H1 (cell line): ENCODE measurements at regions of chr1 and their contacts with region 1.

Region 1: DNA sequence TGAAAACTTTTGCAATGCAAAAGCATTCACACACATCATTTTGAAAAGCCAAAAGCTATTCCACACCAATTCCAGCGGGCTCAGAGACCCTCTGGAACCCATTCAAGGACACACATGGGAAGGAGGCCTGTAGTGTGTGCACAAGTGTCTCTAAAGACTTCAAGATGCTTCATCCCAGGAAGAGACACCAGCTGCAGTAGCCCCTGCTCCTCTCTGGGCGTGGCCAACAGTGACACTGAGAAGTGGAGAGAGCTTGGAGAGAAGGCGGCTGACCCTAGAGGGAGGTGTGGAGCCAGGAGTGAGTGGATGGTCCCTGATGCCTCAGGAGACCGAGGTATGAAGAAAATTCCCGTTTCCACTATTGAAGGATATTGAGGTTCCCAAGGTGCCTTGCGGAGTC is 14.9 kb upstream of the TNNI1 start:
- DNase-seq: peak in 1 of 2 experiments; percentile 63
- H3K4me3 ChIP-seq: no peak overlapping the region
- H3K27ac ChIP-seq: no peak overlapping the region
- H3K4me1 ChIP-seq: peaks cover 0 to 7% (median 3%) of the 10 kb centered on the region in 4 experiments; a peak in 3 of 7 replicates
- H3K27me3 ChIP-seq: no peaks in the 10 kb centered on the region
- CTCF ChIP-seq: peak; percentile 39 to 55 (median 49); a peak in 3 of 4 replicates
- EP300 ChIP-seq: no peak
- POLR2A ChIP-seq: no peak
- RAD21 ChIP-seq: peak; percentile 29 to 54

Region 2: DNA sequence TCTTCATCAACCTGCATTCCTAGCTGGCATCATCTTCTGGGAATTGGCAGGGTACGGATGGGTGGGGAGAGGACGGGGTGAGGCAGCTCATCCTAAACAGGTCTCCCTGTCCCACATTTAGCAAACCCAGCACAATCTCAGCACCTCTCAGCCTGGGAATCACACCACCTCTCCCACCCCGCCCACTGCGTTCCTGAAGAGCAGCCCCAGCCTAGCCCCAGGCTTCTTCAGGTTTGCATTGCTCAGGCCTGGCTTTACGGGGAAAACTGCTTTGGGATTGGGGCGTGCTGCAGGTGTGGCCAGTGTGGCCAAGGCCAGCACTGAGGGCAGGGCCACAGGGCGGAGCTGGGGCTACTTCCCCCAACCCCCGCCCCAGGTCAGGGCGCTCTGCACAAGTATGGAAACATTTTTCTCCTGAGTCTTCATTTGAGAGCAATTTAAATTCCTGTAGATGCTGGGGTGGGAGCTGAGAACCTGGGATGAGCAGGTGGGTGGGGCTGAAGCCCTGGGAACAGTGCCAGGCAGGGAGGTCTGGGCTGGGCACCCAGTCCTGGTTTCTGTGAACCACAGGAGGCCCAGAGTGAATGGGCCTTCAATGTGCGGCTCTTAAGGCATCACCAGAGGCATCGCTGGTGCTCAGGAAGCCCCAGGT is 83.1 kb before region 1 on chr1:
- CTCF ChIA-PET with region 1: interaction called, 17 read pairs
- POLR2A ChIA-PET with region 1: no interaction called
- DNase-seq: no peak
- H3K4me3 ChIP-seq: no peak overlapping the region
- H3K27ac ChIP-seq: no peak overlapping the region
- H3K4me1 ChIP-seq: peaks cover 0 to 11% (median 3%) of the 10 kb centered on the region in 4 experiments; a peak in 6 of 7 replicates
- H3K27me3 ChIP-seq: no peaks in the 10 kb centered on the region
- CTCF ChIP-seq: no peak
- EP300 ChIP-seq: no peak
- POLR2A ChIP-seq: no peak
- RAD21 ChIP-seq: no peak

Region 3: DNA sequence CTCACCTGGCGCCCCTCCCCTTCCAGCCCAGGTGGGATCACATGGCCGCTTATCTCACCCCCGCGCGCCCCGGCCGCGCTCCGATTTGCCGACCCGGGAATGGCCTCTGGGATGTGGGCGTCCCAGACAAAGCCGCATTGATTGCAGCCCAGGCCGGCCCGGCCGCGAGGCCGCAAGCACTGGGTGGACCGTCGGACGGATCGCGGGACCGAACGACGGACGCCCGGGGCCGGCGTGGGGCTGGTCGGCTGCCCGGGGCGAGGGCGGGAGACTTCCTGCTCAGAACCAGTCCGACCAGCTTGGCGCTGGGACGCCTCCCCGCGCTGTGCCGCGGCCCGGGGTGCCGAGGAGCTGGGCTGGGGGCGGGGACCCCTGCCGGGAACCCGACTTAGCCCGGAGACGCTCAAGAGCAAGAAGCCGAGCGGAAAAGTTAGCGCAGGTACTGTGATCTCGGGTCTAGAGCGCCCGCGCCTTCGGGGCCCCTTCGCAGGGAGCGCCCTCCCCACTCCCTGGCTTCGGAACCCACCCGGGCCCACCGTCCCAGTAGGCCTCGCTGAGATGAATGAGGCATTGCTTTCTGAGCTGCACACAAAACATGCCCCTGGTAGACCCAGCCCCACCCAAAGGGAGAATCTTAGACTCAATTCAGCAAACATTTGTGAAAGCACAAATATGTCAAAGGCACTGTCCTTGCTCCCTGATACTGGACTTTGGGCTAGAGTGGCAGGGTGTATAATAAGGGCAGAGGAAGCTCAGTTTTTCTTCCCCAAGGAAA is 36.9 kb before region 1 on chr1:
- CTCF ChIA-PET with region 1: interaction called, 15 read pairs
- POLR2A ChIA-PET with region 1: interaction called, 3 read pairs
- DNase-seq: peak; percentile 13 to 85
- H3K4me3 ChIP-seq: peak overlapping the region; percentile 51 to 74 (median 60)
- H3K27ac ChIP-seq: no peak overlapping the region
- H3K4me1 ChIP-seq: peaks cover 3 to 24% (median 16%) of the 10 kb centered on the region in 4 experiments
- H3K27me3 ChIP-seq: peaks cover 0 to 12% (median 2%) of the 10 kb centered on the region in 4 experiments; a peak in 5 of 7 replicates
- CTCF ChIP-seq: no peak
- EP300 ChIP-seq: no peak
- POLR2A ChIP-seq: peak in 1 of 2 experiments; percentile 75; a peak in 2 of 3 replicates
- RAD21 ChIP-seq: no peak

Region 4: DNA sequence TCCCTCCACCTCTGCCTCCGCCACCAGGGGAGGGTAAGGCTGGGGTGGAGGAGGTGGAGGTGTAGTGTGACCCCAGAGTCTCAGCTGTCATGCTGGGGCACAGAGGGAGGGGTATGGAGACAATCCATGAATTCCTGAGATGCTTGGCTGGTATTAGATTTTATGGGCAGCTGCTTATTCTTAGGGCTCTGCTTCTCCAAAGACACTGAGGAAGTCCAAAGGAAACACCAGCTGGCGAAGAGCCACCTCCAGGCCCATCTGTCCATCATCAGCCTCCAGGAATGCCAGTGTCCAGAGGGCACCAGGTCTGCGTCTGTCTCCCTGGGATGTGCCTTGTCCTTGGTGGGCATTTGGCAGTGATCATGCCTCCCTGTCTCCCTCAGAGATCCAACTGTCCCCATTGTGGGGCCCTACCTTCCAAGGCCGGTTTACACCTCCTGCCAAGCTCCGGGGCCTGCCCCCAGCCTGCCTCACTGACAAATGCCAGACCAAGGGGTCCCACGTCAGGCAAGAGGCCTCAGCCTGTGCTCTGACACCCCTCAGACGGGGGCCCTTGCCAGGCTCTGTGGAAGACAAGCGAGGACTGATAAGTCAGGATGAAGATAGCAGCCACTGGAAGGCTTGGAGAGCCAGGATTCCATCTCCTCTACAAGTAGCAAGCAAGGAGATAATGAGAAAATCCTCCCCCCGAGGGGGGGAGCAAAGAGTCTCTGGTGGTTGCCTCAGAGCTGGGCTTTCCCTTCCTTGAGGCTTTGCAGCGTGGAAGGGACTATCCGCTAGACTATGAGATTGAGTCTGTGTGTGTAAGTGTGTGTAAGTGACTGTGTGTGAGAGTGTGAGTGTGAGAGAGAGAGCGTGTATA is 16.4 kb before region 1 on chr1:
- CTCF ChIA-PET with region 1: interaction called, 31 read pairs
- POLR2A ChIA-PET with region 1: no interaction called
- DNase-seq: no peak
- H3K4me3 ChIP-seq: no peak overlapping the region
- H3K27ac ChIP-seq: no peak overlapping the region
- H3K4me1 ChIP-seq: peaks cover 0 to 10% (median 0%) of the 10 kb centered on the region in 4 experiments; a peak in 1 of 7 replicates
- H3K27me3 ChIP-seq: 0 out of 7 replicates have a peak, but pooled peaks cover 0 to 2% (median 0%) of the 10 kb centered on the region in 4 experiments
- CTCF ChIP-seq: no peak
- EP300 ChIP-seq: no peak
- POLR2A ChIP-seq: no peak
- RAD21 ChIP-seq: no peak

Region 5: GRCh38 chr1:201468844-201469511 is 32.6 kb after region 1 on chr1 and contains the start of gene PHLDA3:
- CTCF ChIA-PET with region 1: interaction called, 23 read pairs
- POLR2A ChIA-PET with region 1: interaction called, 3 read pairs
- DNase-seq: peak; percentile 77 to 82
- H3K4me3 ChIP-seq: peak within 1 kb of the TSS; percentile 64 to 75 (median 69)
- H3K27ac ChIP-seq: no peak within 1 kb of the TSS; the same call in 1 of the 2 replicates
- H3K4me1 ChIP-seq: peaks cover 0 to 19% (median 11%) of the 10 kb centered on the region in 4 experiments; a peak in 6 of 7 replicates
- H3K27me3 ChIP-seq: peaks cover 5 to 35% (median 31%) of the 10 kb centered on the region in 4 experiments
- CTCF ChIP-seq: no peak
- EP300 ChIP-seq: no peak
- POLR2A ChIP-seq: no peak; a peak in 1 of 3 replicates
- RAD21 ChIP-seq: no peak
- total RNA-seq, gene PHLDA3: 27.5 and 27.7 TPM in 2 replicates

Region 6: DNA sequence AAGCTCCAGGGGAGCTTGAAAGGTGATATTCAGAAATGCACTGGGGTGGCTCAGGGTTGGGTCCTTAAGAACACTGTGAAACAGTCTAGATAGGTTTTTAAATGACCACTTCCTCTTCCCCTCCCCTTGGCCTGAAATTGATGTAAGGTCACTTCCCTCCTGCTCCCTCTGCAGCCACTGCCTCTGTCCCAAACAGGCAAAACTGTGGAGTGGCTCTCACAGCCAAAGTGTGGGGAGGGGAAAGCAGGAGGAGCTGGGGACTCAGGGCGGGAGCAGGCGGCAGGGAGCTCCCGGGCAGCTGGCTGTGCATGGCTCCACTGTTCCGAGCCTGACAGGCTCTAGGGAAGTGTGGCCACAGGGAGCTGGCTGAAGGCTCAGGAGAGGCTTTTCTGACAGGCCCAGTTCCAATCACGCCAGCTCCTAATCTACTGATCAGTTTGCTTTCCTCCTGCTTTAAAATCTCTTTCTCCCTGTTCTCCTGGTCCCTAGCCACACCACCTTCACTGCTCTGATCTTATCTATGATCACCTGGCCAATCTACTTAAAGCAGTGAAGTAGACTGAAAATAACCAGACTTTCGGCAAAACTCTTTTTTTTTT is 75.6 kb after region 1 on chr1:
- CTCF ChIA-PET with region 1: interaction called, 18 read pairs
- POLR2A ChIA-PET with region 1: no interaction called
- DNase-seq: no peak
- H3K4me3 ChIP-seq: no peak overlapping the region
- H3K27ac ChIP-seq: no peak overlapping the region
- H3K4me1 ChIP-seq: peaks cover 3 to 5% (median 5%) of the 10 kb centered on the region in 4 experiments; a peak in 6 of 7 replicates
- H3K27me3 ChIP-seq: peaks cover under 1 to 18% (median 12%) of the 10 kb centered on the region in 4 experiments
- CTCF ChIP-seq: no peak
- EP300 ChIP-seq: no peak
- POLR2A ChIP-seq: no peak
- RAD21 ChIP-seq: no peak